Activated B cell treated with CpG ODN at 0.5 μM for 24 hours (primary cell): ENCODE measurements at regions of chr1 and their contacts with region 1.

Region 1: DNA sequence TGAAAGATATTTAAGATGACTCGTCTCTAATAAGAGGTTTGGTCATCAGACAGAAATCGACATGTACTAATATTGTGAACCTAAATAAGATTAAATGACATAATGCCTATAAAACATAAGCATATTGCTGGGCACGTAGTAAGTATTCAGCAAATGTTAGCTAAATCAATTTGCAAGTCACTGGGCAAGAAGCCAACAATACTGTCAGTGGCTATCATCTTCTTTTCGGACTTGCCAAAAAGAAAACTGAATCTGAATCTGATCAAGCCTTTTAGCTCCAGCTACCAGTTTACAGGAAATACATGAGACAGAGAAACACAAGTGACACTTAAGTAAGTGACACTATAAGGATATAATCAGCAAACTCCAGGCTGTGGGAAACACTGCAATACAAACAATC is 46.0 kb downstream of the RPL5 start:
- DNase-seq: no peak
- ATAC-seq: no peak
- H3K4me3 Mint-ChIP-seq: no peak overlapping the region
- H3K27ac Mint-ChIP-seq: no peak overlapping the region
- H3K4me1 Mint-ChIP-seq: peaks cover 32% of the 10 kb centered on the region
- H3K27me3 Mint-ChIP-seq: no peaks in the 10 kb centered on the region
- CTCF ChIP-seq: no peak

Region 2: DNA sequence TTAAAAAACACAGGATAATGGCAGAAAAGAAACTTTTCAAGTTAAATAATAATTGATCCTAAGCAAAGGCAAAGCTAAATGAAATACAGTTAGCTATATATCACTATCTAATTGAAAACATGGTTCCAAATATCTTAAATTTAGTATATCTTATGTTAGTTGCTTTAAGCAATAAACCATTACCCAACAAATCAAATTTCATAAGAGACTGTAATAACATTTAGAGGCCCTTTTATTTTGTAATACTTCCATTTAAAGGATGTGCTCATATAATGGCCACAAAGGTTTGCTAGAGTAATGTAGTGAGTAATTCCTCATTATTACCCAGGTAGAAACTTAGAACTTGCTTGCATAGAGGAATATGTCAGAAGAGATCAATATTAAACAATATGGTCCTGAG is 13.7 kb before region 1 on chr1:
- CTCF ChIA-PET with region 1: interaction called, 7 read pairs
- POLR2A ChIA-PET with region 1: no interaction called
- intact Hi-C with region 1: loop called (anchors 2 kb)
- DNase-seq: no peak
- ATAC-seq: no peak
- H3K4me3 Mint-ChIP-seq: no peak overlapping the region
- H3K27ac Mint-ChIP-seq: no peak overlapping the region
- H3K4me1 Mint-ChIP-seq: peaks cover 2% of the 10 kb centered on the region
- H3K27me3 Mint-ChIP-seq: no peaks in the 10 kb centered on the region
- CTCF ChIP-seq: no peak

Region 3: DNA sequence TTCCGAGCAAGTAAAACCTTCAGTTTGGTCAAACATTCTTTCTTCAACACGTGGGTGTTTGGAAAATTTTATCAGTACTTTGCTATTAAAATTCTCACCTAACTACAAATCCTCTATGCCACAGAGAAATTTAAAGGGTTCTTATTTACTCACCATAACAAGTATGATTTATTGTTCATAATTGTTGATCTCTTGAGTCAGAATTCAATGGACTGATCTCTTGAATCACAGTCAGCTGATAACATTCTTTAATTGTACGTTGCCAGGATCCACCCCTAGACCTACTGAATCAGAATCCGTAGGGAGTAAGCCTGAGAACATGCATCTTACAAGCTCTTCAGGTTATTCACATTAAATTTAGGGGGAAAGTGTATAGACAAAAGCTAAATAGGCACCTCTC is 32.3 kb after region 1 on chr1:
- CTCF ChIA-PET with region 1: no interaction called
- POLR2A ChIA-PET with region 1: no interaction called
- intact Hi-C with region 1: loop called (anchors 5 kb)
- DNase-seq: no peak
- ATAC-seq: no peak
- H3K4me3 Mint-ChIP-seq: no peak overlapping the region
- H3K27ac Mint-ChIP-seq: no peak overlapping the region
- H3K4me1 Mint-ChIP-seq: peaks cover 44% of the 10 kb centered on the region
- H3K27me3 Mint-ChIP-seq: no peaks in the 10 kb centered on the region
- CTCF ChIP-seq: no peak